Caco-2 (cell line): ENCODE measurements at regions of chr10 and their contacts with region 1.

Region 1: DNA sequence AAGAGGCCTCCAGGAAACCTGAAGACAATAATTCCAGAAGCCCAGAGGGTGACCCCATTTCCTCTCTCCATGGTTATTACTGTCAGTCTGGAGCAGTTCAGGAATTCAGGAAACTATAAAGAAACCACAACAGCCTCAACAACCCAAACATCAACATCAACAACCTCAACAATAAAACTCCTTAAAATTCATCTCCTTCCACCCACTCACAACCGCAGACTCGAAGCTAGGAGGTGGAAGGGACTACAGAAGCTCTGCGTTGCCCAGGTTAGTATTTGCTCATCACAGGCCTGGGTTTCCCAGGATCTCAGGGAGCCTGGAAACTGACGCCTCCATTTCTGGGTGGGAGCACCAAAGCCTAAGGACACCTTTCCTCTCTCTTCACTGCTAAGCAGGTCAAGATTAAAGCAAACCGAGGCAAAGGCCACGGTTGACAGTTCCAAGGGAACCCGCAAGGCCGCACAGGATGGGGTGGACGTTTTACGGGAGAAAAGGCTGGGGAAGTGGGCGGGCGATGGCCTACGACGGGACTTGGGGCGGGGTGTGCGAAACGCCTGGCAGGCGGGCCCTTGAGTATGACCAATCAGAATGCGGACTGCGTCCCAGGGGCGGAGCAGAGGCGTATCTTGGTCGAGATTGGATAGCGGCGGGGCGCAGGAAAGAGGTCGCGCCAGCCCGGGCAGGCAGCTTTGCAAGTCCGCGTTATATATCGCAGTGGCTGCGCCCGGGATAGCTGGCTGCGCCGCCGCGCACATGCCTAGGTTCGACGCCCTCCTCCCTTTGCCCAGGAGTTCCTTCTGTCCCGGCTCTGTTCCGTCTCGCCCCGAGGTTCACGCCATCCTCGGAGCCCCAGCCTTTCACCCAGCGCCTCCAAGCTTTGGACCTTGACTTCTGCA is at the start of gene ELOVL3:
- DNase-seq: peak; percentile 96
- H3K4me3 ChIP-seq: peak within 1 kb of the TSS; percentile 44
- H3K4me3 Mint-ChIP-seq: peak within 1 kb of the TSS; percentile 73
- H3K27ac Mint-ChIP-seq: peak within 1 kb of the TSS; percentile 7
- H3K4me1 ChIP-seq: peaks cover 13% of the 10 kb centered on the region
- H3K4me1 Mint-ChIP-seq: peaks cover 6% of the 10 kb centered on the region
- H3K27me3 ChIP-seq: no peaks in the 10 kb centered on the region; the same call in 1 of the 2 replicates
- H3K27me3 Mint-ChIP-seq: peaks cover 17% of the 10 kb centered on the region
- CTCF ChIP-seq: no peak
- total RNA-seq, gene ELOVL3: 1.4 and 2.2 TPM in 2 replicates

Region 2: DNA sequence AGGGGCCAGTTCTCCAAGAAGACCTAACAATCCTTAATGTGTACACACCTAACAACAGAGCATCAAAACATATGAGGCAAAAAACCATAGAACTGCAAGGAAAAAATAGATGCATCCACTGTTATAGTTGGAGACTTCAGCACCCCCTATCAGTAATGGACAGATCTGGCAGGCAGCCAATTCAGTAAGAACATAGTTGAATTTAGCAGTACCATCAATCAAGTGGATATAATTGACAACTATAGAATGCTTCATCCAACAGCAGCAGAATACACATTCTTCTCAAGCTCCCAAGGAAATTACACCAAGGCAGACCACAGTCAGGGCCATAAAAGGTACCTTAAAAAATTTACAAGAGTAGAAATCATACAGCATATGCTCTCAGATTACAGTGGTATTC is 680.0 kb before region 1 on chr10:
- CTCF ChIA-PET with region 1: no interaction called
- POLR2A ChIA-PET with region 1: no interaction called
- intact Hi-C with region 1: no loop called
- DNase-seq: no peak
- H3K4me3 ChIP-seq: no peak overlapping the region
- H3K4me3 Mint-ChIP-seq: no peak overlapping the region
- H3K27ac Mint-ChIP-seq: no peak overlapping the region
- H3K4me1 ChIP-seq: no peaks in the 10 kb centered on the region
- H3K4me1 Mint-ChIP-seq: no peaks in the 10 kb centered on the region
- H3K27me3 ChIP-seq: no peaks in the 10 kb centered on the region
- H3K27me3 Mint-ChIP-seq: no peaks in the 10 kb centered on the region
- CTCF ChIP-seq: no peak

Region 3: GRCh38 chr10:102132563-102133372 is 93.1 kb before region 1 on chr10 and contains the start of gene PPRC1:
- CTCF ChIA-PET with region 1: no interaction called
- POLR2A ChIA-PET with region 1: no interaction called
- intact Hi-C with region 1: loop called (anchors 1 kb)
- DNase-seq: peak; percentile 97 to 99
- H3K4me3 ChIP-seq: peak within 1 kb of the TSS; percentile 92
- H3K4me3 Mint-ChIP-seq: peak within 1 kb of the TSS; percentile 94
- H3K27ac Mint-ChIP-seq: peak within 1 kb of the TSS; percentile 99
- H3K4me1 ChIP-seq: peaks cover 16% of the 10 kb centered on the region
- H3K4me1 Mint-ChIP-seq: peaks cover 7% of the 10 kb centered on the region
- H3K27me3 ChIP-seq: no peaks in the 10 kb centered on the region
- H3K27me3 Mint-ChIP-seq: no peaks in the 10 kb centered on the region
- CTCF ChIP-seq: peak; percentile 82 to 94
- total RNA-seq, gene PPRC1: 66.6 and 68.5 TPM in 2 replicates

Region 4: DNA sequence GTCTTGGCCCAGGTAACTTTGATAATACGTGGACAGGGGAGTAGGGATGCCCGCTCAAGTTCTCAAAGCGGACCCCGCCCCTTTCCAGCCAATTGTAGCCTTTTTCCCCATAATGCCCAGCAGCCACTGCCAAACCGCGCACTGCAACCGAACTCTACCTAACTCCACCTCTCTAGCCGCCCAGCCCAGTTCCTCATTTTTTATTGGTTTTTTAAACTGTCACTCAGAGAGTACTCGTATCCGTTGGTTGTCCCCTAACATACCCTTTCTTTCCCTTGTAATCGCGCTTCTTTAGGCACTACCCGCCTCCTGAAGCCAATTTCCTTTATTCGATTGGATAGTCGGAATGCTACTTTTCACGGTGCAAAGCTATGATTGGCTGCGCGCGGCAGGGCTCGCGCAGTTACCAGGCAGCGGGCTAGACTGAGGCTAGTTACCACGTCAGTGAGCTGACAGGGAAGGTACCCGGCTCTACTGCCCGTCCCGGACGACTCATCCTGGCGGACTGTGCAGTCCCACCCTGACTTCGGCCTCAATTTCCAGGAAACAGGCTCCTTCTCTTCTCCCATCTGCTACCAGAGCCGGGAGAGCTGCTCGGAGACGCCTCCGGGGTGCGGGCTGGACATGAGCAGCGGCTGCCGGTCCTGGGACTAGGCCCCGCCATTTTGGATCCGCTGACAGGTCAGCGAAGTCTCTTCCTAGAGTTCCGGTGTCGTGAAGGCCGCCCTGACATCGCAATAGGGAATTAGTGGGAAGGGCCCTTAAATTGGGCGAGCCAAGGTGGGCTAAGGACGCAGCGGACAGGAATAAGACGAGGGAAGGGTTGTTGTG is 19.4 kb after region 1 on chr10 and contains the start of gene GBF1:
- CTCF ChIA-PET with region 1: interaction called, 19 read pairs
- POLR2A ChIA-PET with region 1: interaction called, 12 read pairs
- intact Hi-C with region 1: no loop called
- DNase-seq: peak; percentile 96 to 97
- H3K4me3 ChIP-seq: peak within 1 kb of the TSS; percentile 73
- H3K4me3 Mint-ChIP-seq: peak within 1 kb of the TSS; percentile 94
- H3K27ac Mint-ChIP-seq: peak within 1 kb of the TSS; percentile 87
- H3K4me1 ChIP-seq: peaks cover 19% of the 10 kb centered on the region
- H3K4me1 Mint-ChIP-seq: peaks cover 46% of the 10 kb centered on the region
- H3K27me3 ChIP-seq: no peaks in the 10 kb centered on the region
- H3K27me3 Mint-ChIP-seq: peaks cover 3% of the 10 kb centered on the region
- CTCF ChIP-seq: no peak
- total RNA-seq, gene GBF1: 69.1 and 69.8 TPM in 2 replicates

Region 5: GRCh38 chr10:102394079-102394800 is 168.3 kb after region 1 on chr10:
- CTCF ChIA-PET with region 1: interaction called, 21 read pairs
- POLR2A ChIA-PET with region 1: interaction called, 3 read pairs
- intact Hi-C with region 1: loop called (anchors 2 kb)
- DNase-seq: peak; percentile 95
- H3K4me3 ChIP-seq: peak overlapping the region; percentile 75
- H3K4me3 Mint-ChIP-seq: peak overlapping the region; percentile 90
- H3K27ac Mint-ChIP-seq: peak overlapping the region; percentile 90
- H3K4me1 ChIP-seq: peaks cover 14% of the 10 kb centered on the region
- H3K4me1 Mint-ChIP-seq: peaks cover 14% of the 10 kb centered on the region
- H3K27me3 ChIP-seq: no peaks in the 10 kb centered on the region
- H3K27me3 Mint-ChIP-seq: no peaks in the 10 kb centered on the region
- CTCF ChIP-seq: no peak

Region 6: GRCh38 chr10:102484021-102484420 is 258.1 kb after region 1 on chr10:
- CTCF ChIA-PET with region 1: no interaction called
- POLR2A ChIA-PET with region 1: no interaction called
- intact Hi-C with region 1: loop called (anchors 2 kb)
- DNase-seq: no peak
- H3K4me3 ChIP-seq: no peak overlapping the region
- H3K4me3 Mint-ChIP-seq: no peak overlapping the region
- H3K27ac Mint-ChIP-seq: no peak overlapping the region
- H3K4me1 ChIP-seq: no peaks in the 10 kb centered on the region
- H3K4me1 Mint-ChIP-seq: no peaks in the 10 kb centered on the region
- H3K27me3 ChIP-seq: no peaks in the 10 kb centered on the region
- H3K27me3 Mint-ChIP-seq: no peaks in the 10 kb centered on the region
- CTCF ChIP-seq: no peak